GM10248 (cell line): ENCODE measurements at regions of chr9 and their contacts with region 1.

Region 1: DNA sequence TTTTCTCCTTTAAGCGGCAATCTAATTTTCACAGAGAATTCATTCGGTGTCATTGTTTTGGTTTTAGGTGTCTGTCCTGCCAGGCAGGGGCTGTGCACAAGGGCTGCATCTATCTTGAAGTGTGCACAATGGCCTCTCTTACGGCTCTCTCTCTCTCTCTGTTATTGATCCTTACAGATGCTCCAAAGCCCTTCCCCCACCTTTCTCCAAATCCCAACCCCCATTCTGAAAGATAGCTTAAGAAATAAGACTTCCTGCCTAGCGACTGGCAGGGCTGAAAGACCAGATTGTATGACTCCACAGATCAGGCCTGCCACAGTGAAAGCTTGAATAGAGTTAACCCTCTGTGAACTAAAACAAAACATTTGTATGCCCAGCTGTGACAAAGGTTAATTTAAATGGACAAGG is 86.5 kb upstream of the NR5A1 start:
- DNase-seq: no peak
- CTCF ChIP-seq: no peak

Region 2: GRCh38 chr9:124480621-124480981 is 113.1 kb before region 1 on chr9:
- CTCF ChIA-PET with region 1: no interaction called
- POLR2A ChIA-PET with region 1: no interaction called
- DNase-seq: peak; percentile 79
- CTCF ChIP-seq: peak; percentile 48

Region 3: GRCh38 chr9:124574534-124575341 is 18.9 kb before region 1 on chr9:
- CTCF ChIA-PET with region 1: interaction called, 10 read pairs
- POLR2A ChIA-PET with region 1: no interaction called
- DNase-seq: no peak
- CTCF ChIP-seq: no peak